HCT116 (cell line): ENCODE measurements at regions of chr4 and their contacts with region 1.

Region 1: DNA sequence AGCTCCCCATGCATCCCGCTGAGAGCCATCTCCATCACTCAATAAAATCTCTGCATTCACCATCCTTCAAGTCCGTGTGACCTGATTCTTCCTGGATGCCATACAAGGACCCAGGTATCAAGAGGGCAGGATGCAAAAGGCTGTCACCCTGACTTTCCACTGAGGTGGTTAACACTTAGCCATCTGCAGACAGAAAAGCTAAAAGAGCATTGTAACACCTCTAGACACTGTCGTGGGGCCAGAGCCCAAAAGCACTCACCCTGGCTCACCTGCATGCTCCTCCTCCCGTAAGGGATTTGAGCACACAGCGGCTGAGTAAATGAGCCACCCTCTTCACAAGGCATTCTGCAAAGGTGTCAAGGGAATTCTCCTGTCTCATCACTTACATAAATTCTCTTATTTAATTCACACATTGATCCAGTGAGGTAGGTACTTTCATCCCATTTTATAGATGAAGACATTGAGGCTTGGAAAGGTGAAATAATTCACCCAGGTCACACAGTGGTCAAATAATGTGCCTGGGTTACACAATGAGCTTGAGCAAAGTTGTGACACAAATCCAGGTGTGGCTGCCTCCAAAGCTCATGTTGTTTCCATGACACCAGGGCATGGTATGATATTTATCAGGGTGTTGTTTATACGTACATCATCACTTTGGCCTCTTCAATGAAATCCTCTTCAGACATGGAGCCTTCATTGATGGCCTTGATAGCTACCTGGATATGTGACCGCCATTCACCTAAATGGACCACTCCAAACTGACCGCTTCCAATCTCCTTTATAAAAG is 48.0 kb downstream of the TXK start:
- DNase-seq: no peak
- ATAC-seq: no peak
- H3K4me3 ChIP-seq: no peak overlapping the region
- H3K27ac ChIP-seq: no peak overlapping the region
- H3K4me1 ChIP-seq: peaks cover 3 to 12% of the 10 kb centered on the region in 2 experiments
- H3K27me3 ChIP-seq: no peaks in the 10 kb centered on the region
- CTCF ChIP-seq: no peak
- POLR2A ChIP-seq: no peak
- RAD21 ChIP-seq: no peak

Region 2: DNA sequence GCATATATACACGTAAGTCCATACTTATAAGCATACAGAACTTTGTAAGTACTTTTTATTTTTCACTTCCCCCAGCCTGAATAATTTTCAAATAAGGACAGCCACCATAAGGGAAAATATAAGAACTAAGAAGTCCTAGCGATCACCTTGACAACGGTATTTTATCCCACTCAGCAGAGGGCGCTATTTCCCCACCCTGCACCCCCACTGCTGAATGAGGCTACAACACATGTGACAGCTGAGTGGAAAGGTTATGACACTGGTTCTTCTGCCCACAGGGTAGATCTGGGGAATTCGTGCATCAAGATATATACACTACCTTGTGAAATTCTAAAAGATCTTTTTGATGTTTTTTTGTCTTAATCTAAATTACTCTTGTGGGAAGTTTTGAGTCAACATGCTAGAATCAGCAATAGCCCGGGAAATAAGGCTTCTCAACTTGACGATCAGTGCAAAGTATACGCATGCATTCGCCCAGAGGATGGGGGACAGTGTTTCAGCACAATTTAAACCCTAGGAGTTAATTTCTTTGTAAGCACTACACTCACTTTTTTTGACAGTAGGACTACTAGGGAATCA is 399.6 kb before region 1 on chr4:
- CTCF ChIA-PET with region 1: no interaction called
- POLR2A ChIA-PET with region 1: no interaction called
- RAD21 ChIA-PET with region 1: no interaction called
- intact Hi-C with region 1: loop called (anchors 5 kb)
- DNase-seq: peak; percentile 43
- ATAC-seq: peak; percentile 91
- H3K4me3 ChIP-seq: no peak overlapping the region
- H3K27ac ChIP-seq: no peak overlapping the region
- H3K4me1 ChIP-seq: no peaks in the 10 kb centered on the region
- H3K27me3 ChIP-seq: no peaks in the 10 kb centered on the region
- CTCF ChIP-seq: peak; percentile 60 to 97 (median 85)
- POLR2A ChIP-seq: no peak
- RAD21 ChIP-seq: peak; percentile 68

Region 3: GRCh38 chr4:47704693-47705325 is 381.2 kb before region 1 on chr4:
- CTCF ChIA-PET with region 1: no interaction called
- POLR2A ChIA-PET with region 1: no interaction called
- RAD21 ChIA-PET with region 1: no interaction called
- intact Hi-C with region 1: loop called (anchors 5 kb)
- DNase-seq: no peak
- ATAC-seq: peak; percentile 93
- H3K4me3 ChIP-seq: no peak overlapping the region
- H3K27ac ChIP-seq: no peak overlapping the region
- H3K4me1 ChIP-seq: no peaks in the 10 kb centered on the region
- H3K27me3 ChIP-seq: no peaks in the 10 kb centered on the region
- CTCF ChIP-seq: peak; percentile 22 to 47 (median 40); a peak in 4 of 6 replicates
- POLR2A ChIP-seq: no peak
- RAD21 ChIP-seq: peak; percentile 55

Region 4: DNA sequence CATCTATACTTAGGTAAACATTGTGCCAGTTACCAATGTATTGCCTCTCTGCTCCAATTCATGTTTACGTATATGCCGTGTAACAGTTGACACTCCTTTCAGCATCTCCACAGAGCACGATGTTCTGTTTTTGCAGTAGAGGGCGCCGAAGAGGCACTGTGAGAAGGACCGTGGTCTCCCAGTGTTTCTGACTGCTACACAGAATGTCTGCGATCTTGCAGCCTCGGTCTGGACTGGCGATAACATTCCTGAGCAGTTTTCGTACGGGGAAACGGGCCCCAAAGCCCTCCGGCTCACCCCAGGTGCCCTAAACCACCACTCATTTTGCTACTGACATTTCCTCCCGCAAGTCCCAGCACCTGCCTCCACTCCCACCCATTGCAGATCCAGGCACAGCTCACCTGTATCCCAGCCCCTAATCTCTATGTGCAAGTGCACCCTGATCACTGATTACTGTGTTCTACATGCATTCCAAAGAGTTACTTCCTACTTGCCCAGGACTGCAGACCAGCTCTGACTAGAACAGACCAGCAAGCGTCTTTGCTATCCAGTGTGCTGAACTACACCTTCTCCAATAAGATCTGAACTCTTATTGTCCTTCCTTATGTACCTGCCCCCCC is 159.3 kb before region 1 on chr4:
- CTCF ChIA-PET with region 1: no interaction called
- POLR2A ChIA-PET with region 1: no interaction called
- RAD21 ChIA-PET with region 1: no interaction called
- intact Hi-C with region 1: loop called (anchors 1 kb)
- DNase-seq: peak; percentile 43
- ATAC-seq: peak; percentile 99
- H3K4me3 ChIP-seq: peak overlapping the region; percentile 29 to 51
- H3K27ac ChIP-seq: no peak overlapping the region
- H3K4me1 ChIP-seq: peaks cover 0 to 9% of the 10 kb centered on the region in 2 experiments; a peak in 2 of 4 replicates
- H3K27me3 ChIP-seq: no peaks in the 10 kb centered on the region
- CTCF ChIP-seq: peak; percentile 39 to 82 (median 80); a peak in 5 of 6 replicates
- POLR2A ChIP-seq: no peak
- RAD21 ChIP-seq: peak; percentile 50

Region 5: GRCh38 chr4:48008021-48008596 is 77.9 kb before region 1 on chr4:
- CTCF ChIA-PET with region 1: interaction called, 10 read pairs
- POLR2A ChIA-PET with region 1: no interaction called
- RAD21 ChIA-PET with region 1: interaction called, 3 to 4 read pairs
- intact Hi-C with region 1: loop called (anchors 1 kb)
- DNase-seq: peak; percentile 34
- ATAC-seq: no peak
- H3K4me3 ChIP-seq: no peak overlapping the region
- H3K27ac ChIP-seq: no peak overlapping the region
- H3K4me1 ChIP-seq: no peaks in the 10 kb centered on the region
- H3K27me3 ChIP-seq: no peaks in the 10 kb centered on the region
- CTCF ChIP-seq: no peak
- POLR2A ChIP-seq: no peak
- RAD21 ChIP-seq: no peak

Region 6: GRCh38 chr4:48016141-48017103 is 69.6 kb before region 1 on chr4 and contains the starts of genes CNGA1 and NIPAL1:
- CTCF ChIA-PET with region 1: no interaction called
- POLR2A ChIA-PET with region 1: no interaction called
- RAD21 ChIA-PET with region 1: no interaction called
- intact Hi-C with region 1: loop called (anchors 5 kb)
- DNase-seq: peak; percentile 63
- ATAC-seq: peak; percentile 93
- H3K4me3 ChIP-seq: peak within 1 kb of the TSS; percentile 70 to 73
- H3K27ac ChIP-seq: peak within 1 kb of the TSS; percentile 63
- H3K4me1 ChIP-seq: peaks cover 6 to 11% of the 10 kb centered on the region in 2 experiments; a peak in 2 of 4 replicates
- H3K27me3 ChIP-seq: no peaks in the 10 kb centered on the region
- CTCF ChIP-seq: peak; percentile 42 to 71 (median 55)
- POLR2A ChIP-seq: peak; percentile 21
- RAD21 ChIP-seq: peak; percentile 32; the same call in 1 of the 2 replicates
- total RNA-seq, gene CNGA1: 2.1 TPM
- total RNA-seq, gene NIPAL1: 7.0 TPM

Region 7: DNA sequence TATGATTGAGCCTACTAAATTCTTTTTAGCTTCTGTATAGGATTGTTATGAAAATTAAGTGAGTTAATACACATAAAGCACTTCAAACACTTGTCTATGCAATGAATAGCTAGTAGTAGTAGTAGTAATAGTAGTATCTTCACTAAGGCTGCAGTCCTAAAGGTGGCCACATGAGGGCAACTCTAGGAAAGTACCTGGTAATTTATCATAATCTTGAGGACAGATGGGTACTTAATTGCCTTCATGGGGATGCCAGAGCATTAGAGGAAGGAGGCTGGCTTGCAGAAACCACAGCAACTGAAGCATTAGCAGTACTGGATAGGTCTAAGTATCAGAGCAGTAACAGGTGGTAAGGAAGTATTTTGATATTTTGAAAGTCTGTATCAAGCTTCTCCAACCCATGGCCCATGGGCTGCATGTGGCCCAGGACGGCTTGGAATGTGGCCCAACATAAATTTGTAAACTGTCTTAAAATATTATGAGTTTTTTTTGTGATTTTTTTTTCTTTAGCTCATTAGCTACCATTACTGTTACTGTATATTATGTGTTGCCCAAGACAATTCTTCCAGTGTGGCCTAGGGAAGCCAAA is 52.1 kb before region 1 on chr4:
- CTCF ChIA-PET with region 1: interaction called, 10 read pairs
- POLR2A ChIA-PET with region 1: no interaction called
- RAD21 ChIA-PET with region 1: no interaction called
- intact Hi-C with region 1: loop called (anchors 5 kb)
- DNase-seq: peak; percentile 10
- ATAC-seq: peak; percentile 84
- H3K4me3 ChIP-seq: no peak overlapping the region
- H3K27ac ChIP-seq: no peak overlapping the region
- H3K4me1 ChIP-seq: no peaks in the 10 kb centered on the region
- H3K27me3 ChIP-seq: no peaks in the 10 kb centered on the region
- CTCF ChIP-seq: peak; percentile 23 to 71 (median 67); a peak in 5 of 6 replicates
- POLR2A ChIP-seq: no peak
- RAD21 ChIP-seq: peak; percentile 31; the same call in 1 of the 2 replicates

Region 8: DNA sequence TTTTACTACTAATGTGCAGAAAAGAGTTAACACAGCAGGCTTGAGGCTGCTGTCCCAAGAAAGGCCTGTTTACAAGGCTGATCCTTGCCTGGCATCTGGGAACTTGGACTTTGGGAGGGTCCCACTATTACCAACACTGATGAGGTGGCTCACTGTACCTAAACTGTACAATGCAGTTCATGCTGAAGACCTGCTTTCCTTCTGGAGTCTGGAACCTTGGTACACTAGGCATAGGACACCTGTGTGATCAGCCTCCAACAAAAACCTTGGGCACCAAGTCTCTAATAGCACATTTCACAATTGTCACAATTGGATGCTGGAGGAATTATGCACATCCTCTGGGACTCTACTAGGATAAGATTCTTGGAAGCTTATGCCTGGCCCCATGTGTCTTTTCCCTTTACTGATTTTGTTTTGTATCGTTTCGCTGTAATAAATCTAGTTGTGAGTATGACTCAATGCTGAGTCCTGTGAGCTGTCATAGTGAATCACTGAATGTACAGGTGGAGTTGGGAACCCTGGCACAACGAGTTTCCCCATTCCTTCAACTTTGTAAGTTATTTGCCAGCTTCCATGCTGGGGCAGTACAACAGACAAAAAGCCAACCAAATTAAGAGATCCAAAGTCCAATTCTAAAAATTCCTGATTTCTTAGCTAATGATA is 137.8 kb after region 1 on chr4:
- CTCF ChIA-PET with region 1: no interaction called
- POLR2A ChIA-PET with region 1: no interaction called
- RAD21 ChIA-PET with region 1: no interaction called
- intact Hi-C with region 1: no loop called
- DNase-seq: peak; percentile 39
- ATAC-seq: peak; percentile 80
- H3K4me3 ChIP-seq: 0 out of 4 replicates have a peak overlapping the region, but pooled peaks of 1 of the 2 experiments have one; percentile 10
- H3K27ac ChIP-seq: no peak overlapping the region
- H3K4me1 ChIP-seq: peaks cover 0 to 15% of the 10 kb centered on the region in 2 experiments; a peak in 3 of 4 replicates
- H3K27me3 ChIP-seq: no peaks in the 10 kb centered on the region
- CTCF ChIP-seq: no peak
- POLR2A ChIP-seq: no peak
- RAD21 ChIP-seq: no peak